Psoas muscle (tissue), 8 donors: ENCODE measurements at regions of chr11 and their contacts with region 1.

Region 1: DNA sequence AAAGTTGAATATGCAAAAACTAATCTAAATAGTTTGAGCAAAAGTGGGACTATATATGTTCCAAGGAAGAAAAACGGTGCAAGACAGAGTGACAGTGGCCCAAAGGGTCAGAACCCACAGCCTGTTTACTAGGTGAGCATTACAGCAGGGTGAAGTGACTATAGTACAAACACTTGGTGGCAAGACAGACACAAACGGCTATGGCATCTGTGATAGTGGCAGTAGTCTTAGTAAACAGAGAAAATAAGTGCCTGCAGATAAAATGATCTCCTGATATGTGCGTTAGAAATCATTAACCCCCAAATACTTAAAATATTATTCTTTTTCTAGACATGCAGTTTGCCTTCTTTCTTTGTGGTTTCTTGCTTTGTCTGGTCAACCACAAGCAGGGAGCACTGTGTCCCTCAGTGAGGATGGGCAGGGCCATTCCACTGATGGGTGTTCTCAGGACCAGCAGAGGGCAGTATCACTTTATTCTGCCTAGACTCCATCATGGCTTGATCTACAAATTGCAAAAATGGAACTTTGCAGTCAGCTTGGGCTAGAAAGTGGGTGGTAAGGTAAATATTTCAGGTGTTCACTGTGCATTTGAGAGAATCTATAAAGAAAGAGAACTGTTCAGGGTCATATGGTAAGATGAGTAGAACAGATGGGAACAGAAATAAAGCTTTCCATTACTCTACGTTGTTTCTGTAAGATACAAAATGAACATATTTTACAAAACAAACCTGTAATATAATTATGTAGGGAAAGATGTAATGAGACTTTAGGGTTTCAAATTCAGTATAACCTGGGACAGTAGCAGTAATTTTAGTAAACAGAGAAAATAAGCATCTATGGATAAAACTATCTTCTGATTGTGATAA is 198.2 kb downstream of the SWAP70 start:
- DNase-seq: peak; percentile 26 to 57
- ATAC-seq: peak; percentile 75 to 91 (median 80)
- H3K4me3 ChIP-seq: no peak overlapping the region
- H3K27ac ChIP-seq: no peak overlapping the region
- H3K4me1 ChIP-seq: no peaks in the 10 kb centered on the region
- H3K27me3 ChIP-seq: no peaks in the 10 kb centered on the region
- CTCF ChIP-seq: peak; percentile 63

Region 2: GRCh38 chr11:9972989-9973388 is 110.9 kb after region 1 on chr11:
- intact Hi-C with region 1: loop called in 1 of 2 experiments (anchors 5 kb)
- DNase-seq: no peak
- ATAC-seq: peak; percentile 59 to 87 (median 68)
- H3K4me3 ChIP-seq: no peak overlapping the region
- H3K27ac ChIP-seq: no peak overlapping the region
- H3K4me1 ChIP-seq: peaks cover 7% of the 10 kb centered on the region
- H3K27me3 ChIP-seq: no peaks in the 10 kb centered on the region
- CTCF ChIP-seq: peak; percentile 72